ENCODE measurements at regions of chr3 and their contacts with region 1.

Region 1: GRCh38 chr3:5026331-5027218 is 47.3 kb downstream of the BHLHE40 start:
- DNase-seq: peak; percentile 41
- H3K4me3 Mint-ChIP-seq: peak overlapping the region; percentile 77
- H3K27ac Mint-ChIP-seq: peak overlapping the region; percentile 90
- H3K4me1 Mint-ChIP-seq: peaks cover 57% of the 10 kb centered on the region
- H3K27me3 Mint-ChIP-seq: no peaks in the 10 kb centered on the region

Region 2: GRCh38 chr3:4776980-4777581 is 249.5 kb before region 1 on chr3:
- intact Hi-C with region 1: loop called (anchors 1 kb)
- DNase-seq: peak; percentile 37
- H3K4me3 Mint-ChIP-seq: peak overlapping the region; percentile 67
- H3K27ac Mint-ChIP-seq: peak overlapping the region; percentile 100
- H3K4me1 Mint-ChIP-seq: peaks cover 77% of the 10 kb centered on the region
- H3K27me3 Mint-ChIP-seq: no peaks in the 10 kb centered on the region

Region 3: GRCh38 chr3:4834403-4834866 is 192.1 kb before region 1 on chr3:
- intact Hi-C with region 1: loop called (anchors 2 kb)
- DNase-seq: peak; percentile 74
- H3K4me3 Mint-ChIP-seq: peak overlapping the region; percentile 74
- H3K27ac Mint-ChIP-seq: peak overlapping the region; percentile 96
- H3K4me1 Mint-ChIP-seq: peaks cover 80% of the 10 kb centered on the region
- H3K27me3 Mint-ChIP-seq: no peaks in the 10 kb centered on the region

Region 4: GRCh38 chr3:4898454-4899313 is 127.9 kb before region 1 on chr3:
- intact Hi-C with region 1: loop called (anchors 2 kb)
- DNase-seq: no peak
- H3K4me3 Mint-ChIP-seq: peak overlapping the region; percentile 26
- H3K27ac Mint-ChIP-seq: peak overlapping the region; percentile 94
- H3K4me1 Mint-ChIP-seq: peaks cover 81% of the 10 kb centered on the region
- H3K27me3 Mint-ChIP-seq: no peaks in the 10 kb centered on the region

Region 5: GRCh38 chr3:5057857-5058324 is 31.3 kb after region 1 on chr3:
- intact Hi-C with region 1: loop called (anchors 2 kb)
- DNase-seq: peak; percentile 65
- H3K4me3 Mint-ChIP-seq: no peak overlapping the region
- H3K27ac Mint-ChIP-seq: peak overlapping the region; percentile 3
- H3K4me1 Mint-ChIP-seq: peaks cover 30% of the 10 kb centered on the region
- H3K27me3 Mint-ChIP-seq: peaks cover 8% of the 10 kb centered on the region

Measured in activated T-helper 2 cell treated with anti-CD3 and anti-CD28 coated beads, Interferon-gamma antibody, Interleukin-2, Interleukin-4, amounts not matched to agents 10 μg/mL and 5 μg/mL and 100 μg/mL, durations not matched to agents 14 hours and 24 hours and 36 hours (primary cell).